ENCODE measurements at regions of chr16 and their contacts with region 1.

Region 1: DNA sequence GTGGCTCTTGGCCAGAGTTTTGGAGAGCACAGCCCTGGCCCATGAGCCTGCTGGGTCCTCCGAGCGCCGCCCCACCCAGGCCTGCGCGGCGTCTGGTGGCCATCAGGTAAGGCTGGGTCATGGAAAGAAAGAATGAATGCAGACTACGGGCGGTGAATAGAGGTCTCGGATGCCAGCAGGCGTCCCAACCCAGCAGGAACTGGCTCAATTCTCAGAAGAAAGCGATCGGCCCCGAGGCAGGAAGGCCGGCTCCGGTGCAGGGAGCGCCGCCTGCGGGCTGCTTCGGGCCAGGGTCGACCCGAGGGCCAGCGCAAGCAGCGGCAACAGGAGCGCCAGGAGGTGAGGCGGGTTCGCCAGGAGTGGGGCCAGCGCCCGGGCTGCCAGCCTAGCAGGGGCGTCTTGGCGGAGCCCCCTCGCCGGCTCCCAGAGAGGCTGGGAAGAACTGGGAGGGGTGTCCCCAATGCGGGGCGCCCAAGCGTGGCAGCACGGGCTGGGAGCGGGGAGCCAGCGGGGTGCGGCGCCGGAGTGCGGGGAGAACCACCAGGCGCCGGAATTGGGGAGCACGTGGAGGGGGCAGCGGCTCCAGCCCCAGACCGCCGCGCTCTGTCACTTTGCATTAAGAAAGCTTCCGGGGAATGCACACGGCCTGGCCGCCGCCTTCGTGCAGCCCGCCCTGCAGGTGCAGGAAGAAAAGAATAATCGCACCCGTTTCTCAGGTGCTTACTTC is 7.1 kb upstream of the TMC5 start:
- DNase-seq: no peak
- ATAC-seq: peak; percentile 89
- H3K4me3 ChIP-seq: peak overlapping the region; percentile 48 to 66
- H3K27ac ChIP-seq: no peak overlapping the region
- H3K4me1 ChIP-seq: peaks cover 9% of the 10 kb centered on the region
- H3K27me3 ChIP-seq: peaks cover 7% of the 10 kb centered on the region
- CTCF ChIP-seq: peak; percentile 66

Region 2: GRCh38 chr16:19524616-19525384 is 114.2 kb after region 1 on chr16:
- CTCF ChIA-PET with region 1: no interaction called
- POLR2A ChIA-PET with region 1: no interaction called
- in situ Hi-C with region 1: loop called (anchors 25 kb)
- intact Hi-C with region 1: no loop called
- DNase-seq: no peak
- ATAC-seq: no peak
- H3K4me3 ChIP-seq: peak overlapping the region; percentile 91 to 93
- H3K27ac ChIP-seq: peak overlapping the region; percentile 90
- H3K4me1 ChIP-seq: peaks cover 29% of the 10 kb centered on the region
- H3K27me3 ChIP-seq: no peaks in the 10 kb centered on the region
- CTCF ChIP-seq: no peak

Region 3: GRCh38 chr16:19717771-19718602 is 307.4 kb after region 1 on chr16 and contains the starts of genes IQCK and KNOP1:
- CTCF ChIA-PET with region 1: no interaction called
- POLR2A ChIA-PET with region 1: interaction called, 19 read pairs
- in situ Hi-C with region 1: no loop called
- intact Hi-C with region 1: no loop called
- DNase-seq: no peak
- ATAC-seq: peak; percentile 98
- H3K4me3 ChIP-seq: peak within 1 kb of the TSS; percentile 91 to 98
- H3K27ac ChIP-seq: peak within 1 kb of the TSS; percentile 92
- H3K4me1 ChIP-seq: 0 out of 2 replicates have a peak, but pooled peaks cover 4% of the 10 kb centered on the region
- H3K27me3 ChIP-seq: no peaks in the 10 kb centered on the region
- CTCF ChIP-seq: no peak
- total RNA-seq, gene IQCK: 15.5 TPM
- total RNA-seq, gene KNOP1: 70.1 TPM

Measured in Panc1 (cell line).